Activated CD4-positive, alpha-beta memory T cell treated with anti-CD3 and anti-CD28 coated beads, Interleukin-2, amount 10 ng/mL, durations not matched to agents 7 days and 5 days (primary cell): ENCODE measurements at regions of chr12 and their contacts with region 1.

Region 1: GRCh38 chr12:69157023-69157655 is 82.2 kb upstream of the CPSF6 start:
- DNase-seq: peak; percentile 92
- H3K4me3 Mint-ChIP-seq: peak overlapping the region; percentile 34
- H3K27ac Mint-ChIP-seq: peak overlapping the region; percentile 44
- H3K4me1 Mint-ChIP-seq: peaks cover 43% of the 10 kb centered on the region
- H3K27me3 Mint-ChIP-seq: no peaks in the 10 kb centered on the region

Region 2: DNA sequence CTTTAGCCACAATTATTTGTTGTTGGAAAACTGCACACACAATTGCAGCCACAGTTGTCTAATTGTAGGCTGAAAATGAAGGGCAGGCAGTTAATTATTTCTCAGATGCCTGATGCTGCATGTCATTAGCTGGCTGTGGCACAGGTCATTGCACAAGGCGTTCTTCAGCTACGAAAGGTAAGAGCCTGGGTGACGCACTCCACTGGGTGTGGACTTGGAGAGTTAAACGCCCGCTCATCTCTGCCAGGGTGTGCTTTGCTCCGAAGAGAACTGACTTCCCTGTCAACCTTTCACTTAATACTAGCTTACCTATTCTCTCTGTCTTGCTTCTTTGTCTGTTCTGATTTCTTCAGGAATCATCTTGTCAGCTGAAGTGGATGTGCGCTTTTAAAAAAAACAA is 132.7 kb before region 1 on chr12:
- CTCF ChIA-PET with region 1: no interaction called
- POLR2A ChIA-PET with region 1: no interaction called
- DNase-seq: no peak
- H3K4me3 Mint-ChIP-seq: no peak overlapping the region
- H3K27ac Mint-ChIP-seq: no peak overlapping the region
- H3K4me1 Mint-ChIP-seq: no peaks in the 10 kb centered on the region
- H3K27me3 Mint-ChIP-seq: peaks cover 33% of the 10 kb centered on the region

Region 3: GRCh38 chr12:69173368-69173767 is 16.2 kb after region 1 on chr12:
- CTCF ChIA-PET with region 1: interaction called, 16 read pairs
- POLR2A ChIA-PET with region 1: interaction called, 3 read pairs
- DNase-seq: no peak
- H3K4me3 Mint-ChIP-seq: no peak overlapping the region
- H3K27ac Mint-ChIP-seq: no peak overlapping the region
- H3K4me1 Mint-ChIP-seq: no peaks in the 10 kb centered on the region
- H3K27me3 Mint-ChIP-seq: peaks cover under 1% of the 10 kb centered on the region

Region 4: DNA sequence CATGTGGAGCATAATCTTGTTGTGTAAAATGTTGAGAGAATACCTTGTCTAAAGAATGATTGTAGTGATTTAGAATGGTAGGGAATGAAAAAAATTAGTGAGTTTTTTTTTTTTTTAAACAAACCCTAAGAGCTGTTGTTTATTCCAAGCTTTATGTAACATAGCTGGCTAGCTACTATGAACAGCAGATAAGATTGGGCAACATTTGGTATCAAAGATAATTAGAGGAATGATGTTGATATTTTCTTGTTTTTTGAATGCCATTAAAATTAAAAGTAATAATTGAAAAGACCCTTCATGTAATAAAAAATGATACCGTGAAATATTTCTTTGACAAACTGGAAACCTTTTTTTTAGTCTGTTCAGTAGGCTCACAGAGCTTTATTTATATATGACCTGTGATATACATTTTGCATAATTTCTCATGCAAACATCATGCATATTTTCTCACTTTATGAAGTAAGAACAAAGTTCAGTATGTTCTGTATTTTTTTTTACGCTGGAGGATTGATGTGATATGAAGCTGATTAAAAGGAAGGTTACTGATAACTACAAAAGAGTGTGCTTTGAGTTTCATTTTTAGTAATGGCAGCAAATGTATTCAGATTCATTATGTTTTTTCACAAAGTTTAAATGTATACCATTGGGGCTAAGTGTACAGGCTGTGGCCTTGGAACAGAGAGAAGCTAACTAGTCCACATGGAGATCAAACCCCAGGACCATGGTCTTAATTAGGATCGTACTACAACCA is 90.3 kb after region 1 on chr12:
- CTCF ChIA-PET with region 1: interaction called, 76 read pairs
- POLR2A ChIA-PET with region 1: interaction called, 7 read pairs
- DNase-seq: no peak
- H3K4me3 Mint-ChIP-seq: peak overlapping the region; percentile 2
- H3K27ac Mint-ChIP-seq: no peak overlapping the region
- H3K4me1 Mint-ChIP-seq: peaks cover 70% of the 10 kb centered on the region
- H3K27me3 Mint-ChIP-seq: no peaks in the 10 kb centered on the region

Region 5: GRCh38 chr12:69330475-69331473 is 173.6 kb after region 1 on chr12:
- CTCF ChIA-PET with region 1: interaction called, 19 read pairs
- POLR2A ChIA-PET with region 1: interaction called, 9 read pairs
- DNase-seq: peak; percentile 73
- H3K4me3 Mint-ChIP-seq: peak overlapping the region; percentile 78
- H3K27ac Mint-ChIP-seq: peak overlapping the region; percentile 92
- H3K4me1 Mint-ChIP-seq: peaks cover 53% of the 10 kb centered on the region
- H3K27me3 Mint-ChIP-seq: no peaks in the 10 kb centered on the region

Region 6: DNA sequence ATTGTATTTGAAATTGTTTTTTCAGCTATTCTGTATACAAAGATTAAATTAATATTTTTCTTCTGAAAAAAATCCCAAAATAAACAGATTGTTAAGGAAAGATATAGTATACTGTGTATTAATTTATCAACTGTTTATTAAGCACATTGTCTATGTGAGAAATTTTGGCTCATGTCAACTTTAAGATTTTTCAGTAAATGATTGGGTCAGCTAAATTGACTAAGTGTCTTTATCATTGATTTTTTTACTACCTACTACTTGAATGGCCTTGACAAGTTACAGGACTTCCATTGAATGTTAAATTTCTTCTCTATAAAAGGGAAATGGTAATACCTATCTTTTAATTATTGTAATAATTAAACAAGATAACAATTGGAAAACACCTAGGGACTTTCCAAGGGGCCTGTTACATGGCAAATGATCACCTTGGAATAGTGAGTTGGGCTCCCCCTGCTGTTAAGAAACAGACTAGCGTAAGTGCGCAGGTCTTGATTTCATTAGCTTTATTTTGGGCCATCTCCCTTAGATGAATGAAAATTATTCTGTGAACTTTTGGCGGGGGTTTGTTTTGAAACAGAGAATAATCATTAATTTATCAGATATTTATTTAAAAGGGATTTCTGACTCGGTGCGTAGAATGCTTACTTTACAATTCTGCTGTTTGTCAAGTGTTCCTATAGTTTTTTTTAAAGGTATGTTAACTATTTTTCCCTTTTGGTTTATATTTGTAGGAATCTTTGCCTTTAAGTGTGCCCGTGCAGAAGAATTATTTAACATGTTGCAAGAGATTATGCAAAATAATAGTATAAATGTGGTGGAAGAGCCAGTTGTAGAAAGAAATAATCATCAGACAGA is 413.6 kb after region 1 on chr12:
- CTCF ChIA-PET with region 1: interaction called, 23 read pairs
- POLR2A ChIA-PET with region 1: no interaction called
- DNase-seq: peak; percentile 49
- H3K4me3 Mint-ChIP-seq: no peak overlapping the region
- H3K27ac Mint-ChIP-seq: no peak overlapping the region
- H3K4me1 Mint-ChIP-seq: peaks cover 3% of the 10 kb centered on the region
- H3K27me3 Mint-ChIP-seq: no peaks in the 10 kb centered on the region